Activated CD4-positive, alpha-beta T cell treated with anti-CD3 and anti-CD28 coated beads for 36 hours (primary cell): ENCODE measurements at regions of chr11 and their contacts with region 1.

Region 1: GRCh38 chr11:46006418-46007070 is 84.1 kb downstream of the LARGE2 start:
- DNase-seq: peak; percentile 16
- ATAC-seq: peak; percentile 83
- H3K4me3 Mint-ChIP-seq: no peak overlapping the region
- H3K27ac Mint-ChIP-seq: no peak overlapping the region
- H3K4me1 Mint-ChIP-seq: peaks cover 2% of the 10 kb centered on the region
- H3K27me3 Mint-ChIP-seq: no peaks in the 10 kb centered on the region

Region 2: DNA sequence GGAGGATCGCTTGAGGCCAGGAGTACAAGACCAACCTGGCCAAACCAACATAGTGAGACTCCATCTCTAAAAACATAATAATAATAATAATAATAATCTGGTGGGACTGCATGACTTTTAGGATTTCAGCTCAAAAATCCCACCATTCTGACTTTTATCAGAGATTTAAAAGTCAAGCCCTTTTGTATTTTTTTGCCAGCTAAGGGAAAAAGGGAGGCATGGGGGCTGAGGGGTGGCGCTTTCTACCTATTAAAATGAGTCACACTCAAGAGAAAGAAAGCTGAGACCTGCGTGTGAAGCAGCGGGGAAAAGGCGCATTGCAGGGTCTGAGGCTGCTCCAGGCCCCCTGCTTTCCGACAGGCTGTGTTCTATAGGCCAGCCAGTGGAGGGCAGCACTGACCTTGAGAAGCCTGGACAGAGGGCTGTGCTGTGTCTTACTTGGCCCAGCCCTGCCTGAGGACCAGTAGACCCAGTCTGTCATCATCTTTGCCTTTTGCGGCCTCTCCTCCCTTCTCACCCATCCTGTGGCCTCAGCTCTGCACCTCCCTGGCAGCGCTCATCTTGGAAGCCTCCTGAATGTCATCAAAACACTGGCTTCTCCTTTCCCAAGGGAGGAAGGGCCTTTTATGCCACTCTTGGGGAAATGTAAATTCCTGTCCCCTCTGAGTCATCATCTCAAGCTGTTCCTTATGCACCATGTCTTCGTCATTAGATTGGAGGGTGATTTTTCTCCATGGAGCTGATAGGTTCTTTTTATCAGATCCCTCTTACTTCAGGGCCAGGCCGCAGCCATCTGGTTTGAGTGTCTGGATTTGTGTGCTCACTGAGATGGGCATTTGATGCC is 133.8 kb before region 1 on chr11:
- CTCF ChIA-PET with region 1: interaction called, 17 read pairs
- POLR2A ChIA-PET with region 1: no interaction called
- intact Hi-C with region 1: loop called (anchors 1 to 10 kb)
- DNase-seq: peak; percentile 65
- ATAC-seq: peak; percentile 89
- H3K4me3 Mint-ChIP-seq: no peak overlapping the region
- H3K27ac Mint-ChIP-seq: no peak overlapping the region
- H3K4me1 Mint-ChIP-seq: no peaks in the 10 kb centered on the region
- H3K27me3 Mint-ChIP-seq: no peaks in the 10 kb centered on the region

Region 3: GRCh38 chr11:45982656-45983470 is 23.7 kb before region 1 on chr11:
- CTCF ChIA-PET with region 1: interaction called, 15 read pairs
- POLR2A ChIA-PET with region 1: no interaction called
- intact Hi-C with region 1: no loop called
- DNase-seq: peak; percentile 78
- ATAC-seq: peak; percentile 91
- H3K4me3 Mint-ChIP-seq: peak overlapping the region; percentile 9
- H3K27ac Mint-ChIP-seq: peak overlapping the region; percentile 76
- H3K4me1 Mint-ChIP-seq: peaks cover 30% of the 10 kb centered on the region
- H3K27me3 Mint-ChIP-seq: no peaks in the 10 kb centered on the region

Region 4: GRCh38 chr11:45993531-45994001 is 13.0 kb before region 1 on chr11:
- CTCF ChIA-PET with region 1: interaction called, 29 read pairs
- POLR2A ChIA-PET with region 1: no interaction called
- intact Hi-C with region 1: no loop called
- DNase-seq: no peak
- ATAC-seq: no peak
- H3K4me3 Mint-ChIP-seq: no peak overlapping the region
- H3K27ac Mint-ChIP-seq: no peak overlapping the region
- H3K4me1 Mint-ChIP-seq: peaks cover 4% of the 10 kb centered on the region
- H3K27me3 Mint-ChIP-seq: no peaks in the 10 kb centered on the region

Region 5: DNA sequence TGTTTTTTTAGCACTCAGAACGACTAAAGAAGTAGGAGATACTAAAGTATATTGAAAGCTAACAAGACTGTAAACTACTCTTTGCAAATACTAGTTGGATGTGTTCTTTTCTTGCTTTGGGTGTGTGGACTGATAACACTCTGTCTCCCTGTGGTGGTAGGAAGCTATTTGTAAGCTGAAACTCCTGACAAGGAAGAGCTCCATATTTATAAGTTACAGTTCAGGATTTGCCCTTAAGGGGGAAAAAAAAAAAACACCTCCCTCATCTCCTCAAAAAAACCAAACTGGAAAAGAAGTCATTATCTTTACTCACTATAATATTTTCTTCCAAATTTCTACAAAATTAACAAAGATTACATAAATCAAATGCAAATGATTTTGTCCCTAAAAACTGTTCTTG is 10.8 kb after region 1 on chr11:
- CTCF ChIA-PET with region 1: interaction called, 17 read pairs
- POLR2A ChIA-PET with region 1: no interaction called
- intact Hi-C with region 1: no loop called
- DNase-seq: no peak
- ATAC-seq: no peak
- H3K4me3 Mint-ChIP-seq: no peak overlapping the region
- H3K27ac Mint-ChIP-seq: no peak overlapping the region
- H3K4me1 Mint-ChIP-seq: peaks cover 2% of the 10 kb centered on the region
- H3K27me3 Mint-ChIP-seq: no peaks in the 10 kb centered on the region

Region 6: GRCh38 chr11:46367244-46367915 is 360.8 kb after region 1 on chr11:
- CTCF ChIA-PET with region 1: no interaction called
- POLR2A ChIA-PET with region 1: no interaction called
- intact Hi-C with region 1: no loop called
- DNase-seq: peak; percentile 87
- ATAC-seq: peak; percentile 86
- H3K4me3 Mint-ChIP-seq: no peak overlapping the region
- H3K27ac Mint-ChIP-seq: peak overlapping the region; percentile 83
- H3K4me1 Mint-ChIP-seq: peaks cover 30% of the 10 kb centered on the region
- H3K27me3 Mint-ChIP-seq: no peaks in the 10 kb centered on the region